ENCODE measurements at regions of chr15 and their contacts with region 1.

Region 1: DNA sequence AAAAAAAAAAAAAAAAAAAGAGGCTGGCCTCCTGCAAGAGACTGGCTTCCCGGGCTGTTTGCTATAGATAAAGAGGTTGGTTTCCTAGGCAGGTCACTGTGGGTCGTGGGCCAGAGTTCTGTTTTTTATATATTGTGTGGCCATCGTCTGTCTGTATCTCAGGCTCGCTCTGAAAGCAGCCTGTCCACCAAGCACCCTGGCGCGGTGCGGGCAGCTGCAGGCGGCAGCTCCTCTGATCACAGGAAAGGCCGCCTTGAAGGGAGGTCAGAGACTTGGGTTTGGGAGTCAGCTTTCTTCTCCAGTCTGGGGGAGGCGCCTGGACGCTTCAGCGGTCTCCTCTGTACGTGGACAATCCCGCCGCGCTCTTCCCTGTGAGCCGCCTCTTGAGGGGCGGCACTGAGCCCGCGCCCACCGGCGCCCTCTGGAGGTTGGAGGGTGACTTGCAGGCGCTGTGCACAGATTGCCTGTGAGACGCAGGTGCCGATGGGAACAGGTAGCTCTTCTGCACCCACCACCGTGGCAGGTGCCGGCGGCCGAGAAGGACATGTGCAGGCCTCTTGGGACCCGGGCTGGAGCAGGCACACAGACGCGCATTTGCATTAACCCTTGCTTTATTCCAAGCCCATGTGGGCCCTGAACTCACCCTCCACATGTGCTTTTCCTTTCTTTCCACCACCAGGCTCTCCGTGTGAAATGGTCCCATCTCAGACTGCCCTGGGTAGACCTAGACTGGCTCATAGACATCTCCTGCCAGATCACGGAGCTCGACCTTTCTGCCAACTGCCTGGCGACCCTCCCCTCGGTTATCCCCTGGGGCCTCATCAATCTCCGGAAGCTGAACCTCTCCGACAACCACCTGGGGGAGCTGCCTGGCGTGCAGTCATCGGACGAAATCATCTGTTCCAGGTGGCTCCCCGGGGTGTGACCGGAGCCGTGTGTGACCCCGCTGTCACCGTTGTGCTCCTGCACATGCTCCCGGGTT is 89.3 kb downstream of the LRRK1 start:
- DNase-seq: peak; percentile 51 to 91 (median 79)
- ATAC-seq: peak; percentile 93 to 97 (median 95)
- H3K4me3 ChIP-seq: peak overlapping the region; percentile 64 to 84
- H3K4me3 Mint-ChIP-seq: peak overlapping the region; percentile 86 to 94 (median 90)
- H3K27ac ChIP-seq: no peak overlapping the region
- H3K27ac Mint-ChIP-seq: peak overlapping the region in 1 of 2 donors; percentile 64
- H3K4me1 ChIP-seq: peaks cover 0 to 21% of the 10 kb centered on the region in 2 experiments
- H3K4me1 Mint-ChIP-seq: peaks cover 19 to 22% (median 21%) of the 10 kb centered on the region in 3 donors
- H3K27me3 ChIP-seq: peaks cover 0 to 20% of the 10 kb centered on the region in 2 experiments
- H3K27me3 Mint-ChIP-seq: peaks cover 0 to 6% of the 10 kb centered on the region in 2 donors

Region 2: DNA sequence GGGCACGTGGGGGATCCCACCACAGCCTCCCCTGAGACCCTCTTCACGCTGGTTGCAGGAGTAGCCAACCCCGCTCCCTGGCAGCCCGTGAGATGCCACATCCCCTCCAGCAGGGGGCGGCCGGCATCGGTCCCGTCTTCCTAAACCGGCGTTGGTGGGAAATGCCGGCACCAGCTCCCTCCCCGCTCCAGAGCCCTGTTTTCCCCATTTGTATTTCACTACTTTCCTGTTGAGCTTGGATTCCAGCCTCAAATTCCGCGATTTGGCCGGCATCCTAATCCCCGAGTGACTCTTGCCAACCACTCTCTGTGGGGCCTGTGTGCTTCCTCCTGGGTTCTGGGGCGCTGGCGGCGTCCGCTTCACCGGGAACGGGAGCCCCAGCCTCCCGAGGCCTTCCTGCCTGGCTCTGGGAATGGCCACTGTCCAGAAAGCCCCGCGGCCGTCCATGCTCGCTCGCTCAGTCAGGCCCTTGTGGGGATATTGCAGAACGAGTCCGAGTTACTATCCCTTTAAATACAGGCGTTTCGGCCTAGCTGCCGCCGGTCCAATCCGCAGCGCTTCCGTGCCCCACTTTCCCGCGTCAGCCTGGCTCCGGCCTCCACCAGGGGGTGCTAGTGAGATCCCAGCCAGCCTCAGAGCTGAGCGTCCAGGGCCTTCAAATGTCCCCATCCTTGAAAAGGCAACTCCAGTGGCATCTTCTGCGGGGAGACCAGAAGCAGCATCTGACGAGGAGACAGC is 658.6 kb before region 1 on chr15:
- CTCF ChIA-PET with region 1: interaction called, 5 to 16 read pairs
- POLR2A ChIA-PET with region 1: no interaction called
- DNase-seq: peak; percentile 53 to 90 (median 75)
- ATAC-seq: peak; percentile 94 to 96 (median 95)
- H3K4me3 ChIP-seq: peak overlapping the region; percentile 91 to 95
- H3K4me3 Mint-ChIP-seq: peak overlapping the region; percentile 89 to 97 (median 92)
- H3K27ac ChIP-seq: peak overlapping the region; percentile 65
- H3K27ac Mint-ChIP-seq: peak overlapping the region; percentile 81 to 85
- H3K4me1 ChIP-seq: peaks cover 0 to 13% of the 10 kb centered on the region in 2 experiments
- H3K4me1 Mint-ChIP-seq: peaks cover 7 to 15% (median 10%) of the 10 kb centered on the region in 3 donors
- H3K27me3 ChIP-seq: peaks cover 0 to 2% of the 10 kb centered on the region in 2 experiments
- H3K27me3 Mint-ChIP-seq: peaks cover 17 to 23% of the 10 kb centered on the region in 2 donors

Region 3: GRCh38 chr15:100918034-100918689 is 90.3 kb before region 1 on chr15:
- CTCF ChIA-PET with region 1: interaction called, 3 to 30 read pairs
- POLR2A ChIA-PET with region 1: no interaction called
- DNase-seq: peak; percentile 14 to 66 (median 46)
- ATAC-seq: peak; percentile 85 to 95 (median 92)
- H3K4me3 ChIP-seq: peak overlapping the region; percentile 43 to 48
- H3K4me3 Mint-ChIP-seq: peak overlapping the region; percentile 57 to 80 (median 72)
- H3K27ac ChIP-seq: no peak overlapping the region
- H3K27ac Mint-ChIP-seq: no peak overlapping the region
- H3K4me1 ChIP-seq: peaks cover 0 to 15% of the 10 kb centered on the region in 2 experiments
- H3K4me1 Mint-ChIP-seq: peaks cover 6 to 27% (median 19%) of the 10 kb centered on the region in 3 donors
- H3K27me3 ChIP-seq: peaks cover 0 to 50% of the 10 kb centered on the region in 2 experiments
- H3K27me3 Mint-ChIP-seq: peaks cover 64 to 72% of the 10 kb centered on the region in 2 donors

Region 4: GRCh38 chr15:100981086-100981485 is 27.4 kb before region 1 on chr15:
- CTCF ChIA-PET with region 1: interaction called, 3 to 14 read pairs
- POLR2A ChIA-PET with region 1: no interaction called
- DNase-seq: no peak
- ATAC-seq: no peak
- H3K4me3 ChIP-seq: no peak overlapping the region
- H3K4me3 Mint-ChIP-seq: no peak overlapping the region
- H3K27ac ChIP-seq: no peak overlapping the region
- H3K27ac Mint-ChIP-seq: no peak overlapping the region
- H3K4me1 ChIP-seq: no peaks in the 10 kb centered on the region
- H3K4me1 Mint-ChIP-seq: no peaks in the 10 kb centered on the region
- H3K27me3 ChIP-seq: peaks cover 2 to 18% of the 10 kb centered on the region in 2 experiments
- H3K27me3 Mint-ChIP-seq: peaks cover 29 to 32% of the 10 kb centered on the region in 2 donors

Region 5: DNA sequence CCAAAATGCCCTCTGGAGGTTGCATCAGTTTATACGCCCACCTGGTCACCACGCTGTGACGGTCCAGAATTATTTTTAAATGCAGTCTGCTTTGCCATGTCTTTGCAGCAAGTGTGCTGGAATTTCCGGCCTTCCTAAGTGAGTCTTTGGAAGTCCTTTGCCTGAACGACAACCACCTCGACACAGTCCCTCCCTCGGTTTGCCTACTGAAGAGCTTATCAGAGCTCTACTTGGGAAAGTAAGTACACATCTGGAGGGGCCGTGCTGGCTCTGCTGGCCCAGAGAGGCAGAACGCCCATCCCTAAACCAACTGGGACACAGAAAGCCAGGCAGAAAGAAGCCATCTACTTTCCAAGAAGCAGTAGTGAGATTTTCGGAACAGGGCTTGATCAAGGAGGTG is 12.5 kb after region 1 on chr15:
- CTCF ChIA-PET with region 1: interaction called, 4 to 12 read pairs
- POLR2A ChIA-PET with region 1: no interaction called
- DNase-seq: no peak
- ATAC-seq: no peak
- H3K4me3 ChIP-seq: no peak overlapping the region
- H3K4me3 Mint-ChIP-seq: no peak overlapping the region
- H3K27ac ChIP-seq: no peak overlapping the region
- H3K27ac Mint-ChIP-seq: no peak overlapping the region
- H3K4me1 ChIP-seq: no peaks in the 10 kb centered on the region
- H3K4me1 Mint-ChIP-seq: no peaks in the 10 kb centered on the region
- H3K27me3 ChIP-seq: peaks cover 0 to 3% of the 10 kb centered on the region in 2 experiments
- H3K27me3 Mint-ChIP-seq: peaks cover 2 to 3% of the 10 kb centered on the region in 2 donors

Region 6: DNA sequence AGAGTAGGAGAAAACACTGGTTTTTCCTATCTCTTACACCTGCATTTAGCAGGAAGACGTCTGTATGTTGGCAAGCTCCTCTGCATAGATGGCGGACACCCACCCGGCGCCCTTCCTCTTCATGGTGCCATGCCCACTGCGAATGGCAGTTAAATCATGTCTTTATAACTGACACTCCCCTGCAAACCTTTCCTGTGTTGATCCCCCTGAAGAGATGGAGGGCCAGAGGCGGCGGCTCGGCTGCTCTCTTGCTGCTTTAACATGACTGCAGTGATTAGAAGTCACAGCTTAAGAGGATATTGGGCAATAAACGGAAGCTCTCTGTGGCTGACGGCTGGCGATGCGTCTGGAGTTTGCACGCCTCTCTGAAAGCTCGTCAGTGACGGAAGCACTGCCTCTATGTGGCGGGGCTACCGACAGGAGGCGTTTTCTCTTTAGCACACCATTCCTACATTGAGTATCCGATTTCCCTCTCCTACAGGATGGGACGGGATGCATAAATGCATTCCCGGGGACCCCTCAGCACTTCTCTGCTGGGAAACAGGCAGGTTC is 312.1 kb after region 1 on chr15:
- CTCF ChIA-PET with region 1: no interaction called
- POLR2A ChIA-PET with region 1: interaction called in 1 of 2 experiments, 10 read pairs
- DNase-seq: peak; percentile 37 to 82 (median 62)
- ATAC-seq: peak; percentile 87 to 99 (median 96)
- H3K4me3 ChIP-seq: peak overlapping the region; percentile 36 to 58
- H3K4me3 Mint-ChIP-seq: peak overlapping the region; percentile 69 to 79 (median 77)
- H3K27ac ChIP-seq: peak overlapping the region; percentile 67
- H3K27ac Mint-ChIP-seq: peak overlapping the region; percentile 92
- H3K4me1 ChIP-seq: peaks cover 3 to 16% of the 10 kb centered on the region in 2 experiments
- H3K4me1 Mint-ChIP-seq: peaks cover 13 to 15% (median 14%) of the 10 kb centered on the region in 3 donors
- H3K27me3 ChIP-seq: peaks cover 0 to 48% of the 10 kb centered on the region in 2 experiments
- H3K27me3 Mint-ChIP-seq: peaks cover 15 to 39% of the 10 kb centered on the region in 2 donors